ENCODE measurements at regions of chr12 and their contacts with region 1.

Region 1: GRCh38 chr12:66708704-66709456 is 30.0 kb upstream of the GRIP1 start:
- DNase-seq: no peak
- H3K4me3 ChIP-seq: no peak overlapping the region
- H3K27ac ChIP-seq: no peak overlapping the region
- H3K4me1 ChIP-seq: no peaks in the 10 kb centered on the region
- H3K27me3 ChIP-seq: peaks cover 0 to 1% (median 0%) of the 10 kb centered on the region in 4 experiments; a peak in 1 of 7 replicates
- CTCF ChIP-seq: no peak
- EP300 ChIP-seq: no peak
- POLR2A ChIP-seq: no peak
- RAD21 ChIP-seq: peak in 1 of 2 experiments; percentile 22; a peak in 2 of 4 replicates

Region 2: DNA sequence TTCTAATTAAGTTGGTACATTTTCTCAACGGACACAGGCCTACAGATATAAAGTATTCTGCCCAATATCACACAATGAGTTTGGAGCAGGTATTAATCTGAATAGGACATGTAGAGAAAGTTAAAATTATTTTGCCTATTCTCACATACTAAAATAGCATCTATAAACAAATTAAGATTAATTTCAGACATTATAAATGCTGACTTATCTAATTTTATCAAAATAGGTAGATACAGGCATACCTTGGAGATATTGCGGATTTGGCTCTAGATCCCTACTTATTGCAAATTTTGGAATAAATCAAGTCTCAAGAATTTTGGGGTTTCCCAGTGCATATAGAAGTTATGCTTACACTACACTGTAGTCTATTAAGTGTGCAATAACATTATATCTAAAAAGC is 11.0 kb after region 1 on chr12:
- CTCF ChIA-PET with region 1: interaction called, 12 read pairs
- POLR2A ChIA-PET with region 1: no interaction called
- DNase-seq: no peak
- H3K4me3 ChIP-seq: no peak overlapping the region
- H3K27ac ChIP-seq: no peak overlapping the region
- H3K4me1 ChIP-seq: peaks cover 0 to 2% (median 0%) of the 10 kb centered on the region in 4 experiments; a peak in 1 of 7 replicates
- H3K27me3 ChIP-seq: no peaks in the 10 kb centered on the region
- CTCF ChIP-seq: no peak
- EP300 ChIP-seq: no peak
- POLR2A ChIP-seq: no peak
- RAD21 ChIP-seq: no peak

Region 3: DNA sequence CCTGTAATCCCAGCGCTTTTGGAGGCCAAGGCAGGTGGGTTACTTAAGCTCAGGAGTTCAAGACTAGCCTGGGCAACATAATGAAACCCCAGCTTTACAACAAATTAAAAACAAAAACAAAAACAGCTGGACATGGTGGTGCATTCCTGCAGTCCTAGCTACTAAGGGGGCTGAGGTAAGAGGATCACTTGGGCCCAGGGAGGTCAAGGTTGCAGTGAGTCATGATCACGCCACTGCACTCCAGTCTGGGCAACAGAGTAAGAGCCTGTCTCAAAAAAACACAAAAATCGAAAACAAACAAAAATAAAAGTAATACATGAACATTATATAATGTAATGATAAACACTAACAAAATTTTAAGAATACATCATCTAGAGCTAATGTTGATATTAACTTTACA is 16.2 kb after region 1 on chr12:
- CTCF ChIA-PET with region 1: interaction called, 14 read pairs
- POLR2A ChIA-PET with region 1: interaction called, 5 read pairs
- DNase-seq: no peak
- H3K4me3 ChIP-seq: no peak overlapping the region
- H3K27ac ChIP-seq: no peak overlapping the region
- H3K4me1 ChIP-seq: peaks cover 0 to 3% (median 1%) of the 10 kb centered on the region in 4 experiments; a peak in 2 of 7 replicates
- H3K27me3 ChIP-seq: no peaks in the 10 kb centered on the region
- CTCF ChIP-seq: no peak
- EP300 ChIP-seq: no peak
- POLR2A ChIP-seq: no peak
- RAD21 ChIP-seq: no peak